ENCODE measurements at regions of chr7 and their contacts with region 1.

Region 1: GRCh38 chr7:22909917-22910316 is 87.3 kb upstream of the TOMM7 start:
- DNase-seq: no peak
- H3K4me3 ChIP-seq: no peak overlapping the region
- H3K27ac ChIP-seq: no peak overlapping the region
- H3K4me1 ChIP-seq: no peaks in the 10 kb centered on the region
- H3K27me3 ChIP-seq: no peaks in the 10 kb centered on the region
- CTCF ChIP-seq: no peak
- POLR2A ChIP-seq: no peak

Region 2: GRCh38 chr7:23385140-23385539 is 475.2 kb after region 1 on chr7:
- intact Hi-C with region 1: loop called (anchors 5 kb)
- DNase-seq: no peak
- H3K4me3 ChIP-seq: no peak overlapping the region
- H3K27ac ChIP-seq: no peak overlapping the region
- H3K4me1 ChIP-seq: no peaks in the 10 kb centered on the region
- H3K27me3 ChIP-seq: peaks cover 0 to 8% of the 10 kb centered on the region in 2 donors
- CTCF ChIP-seq: no peak
- POLR2A ChIP-seq: no peak

Region 3: DNA sequence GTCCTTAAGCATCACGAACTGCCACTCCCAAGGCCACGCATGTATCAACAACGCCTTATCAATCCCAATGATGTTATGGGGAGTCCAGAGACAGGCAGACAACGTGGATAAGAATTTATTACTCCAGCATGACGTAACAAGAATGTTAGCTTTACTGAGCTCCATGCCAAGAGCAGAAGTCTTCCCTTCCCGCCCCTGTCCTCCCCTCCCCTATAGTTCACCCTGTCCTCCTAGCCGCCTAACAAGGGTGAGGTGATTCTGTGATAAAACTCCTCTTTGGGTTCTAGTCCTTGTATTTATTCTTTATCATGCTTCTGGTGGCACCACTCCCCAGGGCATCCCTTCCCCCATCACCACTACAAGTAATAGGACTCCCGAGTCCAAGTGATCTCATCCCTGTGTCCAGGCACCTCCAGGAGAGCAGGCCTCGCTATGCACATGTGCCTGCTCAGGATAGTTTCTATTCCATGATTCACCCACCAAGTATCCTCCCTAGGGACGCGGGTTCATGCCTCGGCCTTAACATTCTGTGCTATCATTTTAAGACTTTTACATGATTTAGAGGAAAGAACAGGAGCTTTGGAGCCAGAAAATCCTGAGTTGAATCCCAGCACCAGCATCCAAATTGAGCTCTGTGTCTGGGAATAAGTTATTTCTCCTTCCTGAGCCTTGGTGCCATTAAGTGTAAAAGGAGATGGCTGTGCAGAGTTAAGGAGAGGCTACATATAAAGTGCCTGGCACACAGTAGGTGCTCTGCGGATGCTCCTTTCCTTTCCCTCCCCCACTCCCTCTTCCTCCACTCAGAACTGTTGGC is 1832.0 kb after region 1 on chr7:
- intact Hi-C with region 1: no loop called
- DNase-seq: no peak
- H3K4me3 ChIP-seq: no peak overlapping the region
- H3K27ac ChIP-seq: peak overlapping the region in 1 of 2 donors; percentile 10
- H3K4me1 ChIP-seq: no peaks in the 10 kb centered on the region
- H3K27me3 ChIP-seq: no peaks in the 10 kb centered on the region
- CTCF ChIP-seq: no peak
- POLR2A ChIP-seq: no peak

Measured in breast epithelium (tissue), 4 donors.